Natural killer cell (primary cell): ENCODE measurements at regions of chr17 and their contacts with region 1.

Region 1: DNA sequence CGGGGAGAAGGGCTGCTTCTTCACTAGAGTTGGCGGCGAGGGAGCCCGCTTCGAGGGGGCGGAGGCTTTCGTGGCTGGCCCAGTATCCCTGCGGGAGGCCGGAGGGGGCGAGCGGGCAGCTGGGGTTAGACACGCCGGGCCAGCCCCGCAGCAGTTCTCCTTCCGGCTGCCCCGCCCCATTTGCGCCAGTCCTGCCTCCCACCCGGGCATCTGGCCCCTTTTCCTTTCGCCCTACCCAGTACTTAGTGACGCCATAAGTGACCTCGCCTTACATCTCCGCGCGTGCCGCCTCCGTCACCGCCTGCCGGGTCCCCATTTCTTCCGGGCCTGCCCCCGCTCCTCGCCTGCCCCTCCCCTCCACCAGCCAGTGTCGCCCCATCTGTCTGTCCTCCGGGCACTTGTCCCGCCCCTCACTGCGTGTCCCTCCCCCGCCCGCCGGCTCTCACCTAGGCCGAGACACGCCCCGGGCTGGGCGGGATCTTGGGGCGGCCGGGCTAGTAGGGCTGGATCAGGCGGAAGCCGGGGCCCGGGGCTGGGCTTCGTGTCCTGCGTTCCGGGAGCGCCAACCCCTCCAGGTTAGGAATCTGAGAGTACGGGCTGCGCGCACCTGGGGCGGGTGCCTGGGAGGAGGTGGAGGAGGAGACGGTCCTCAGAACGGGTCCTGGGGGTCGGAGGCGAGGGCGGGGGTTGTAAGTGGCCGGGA is 14.3 kb downstream of the SPATA32 start:
- DNase-seq: peak; percentile 89 to 96
- ATAC-seq: peak; percentile 83 to 93 (median 83)
- H3K4me3 ChIP-seq: peak overlapping the region; percentile 72
- H3K4me3 Mint-ChIP-seq: peak overlapping the region; percentile 87
- H3K27ac ChIP-seq: peak overlapping the region; percentile 81
- H3K27ac Mint-ChIP-seq: peak overlapping the region; percentile 87 to 89
- H3K4me1 ChIP-seq: peaks cover 36% of the 10 kb centered on the region
- H3K4me1 Mint-ChIP-seq: peaks cover 33 to 61% of the 10 kb centered on the region in 2 donors
- H3K27me3 ChIP-seq: no peaks in the 10 kb centered on the region
- H3K27me3 Mint-ChIP-seq: no peaks in the 10 kb centered on the region
- CTCF ChIP-seq: no peak

Region 2: DNA sequence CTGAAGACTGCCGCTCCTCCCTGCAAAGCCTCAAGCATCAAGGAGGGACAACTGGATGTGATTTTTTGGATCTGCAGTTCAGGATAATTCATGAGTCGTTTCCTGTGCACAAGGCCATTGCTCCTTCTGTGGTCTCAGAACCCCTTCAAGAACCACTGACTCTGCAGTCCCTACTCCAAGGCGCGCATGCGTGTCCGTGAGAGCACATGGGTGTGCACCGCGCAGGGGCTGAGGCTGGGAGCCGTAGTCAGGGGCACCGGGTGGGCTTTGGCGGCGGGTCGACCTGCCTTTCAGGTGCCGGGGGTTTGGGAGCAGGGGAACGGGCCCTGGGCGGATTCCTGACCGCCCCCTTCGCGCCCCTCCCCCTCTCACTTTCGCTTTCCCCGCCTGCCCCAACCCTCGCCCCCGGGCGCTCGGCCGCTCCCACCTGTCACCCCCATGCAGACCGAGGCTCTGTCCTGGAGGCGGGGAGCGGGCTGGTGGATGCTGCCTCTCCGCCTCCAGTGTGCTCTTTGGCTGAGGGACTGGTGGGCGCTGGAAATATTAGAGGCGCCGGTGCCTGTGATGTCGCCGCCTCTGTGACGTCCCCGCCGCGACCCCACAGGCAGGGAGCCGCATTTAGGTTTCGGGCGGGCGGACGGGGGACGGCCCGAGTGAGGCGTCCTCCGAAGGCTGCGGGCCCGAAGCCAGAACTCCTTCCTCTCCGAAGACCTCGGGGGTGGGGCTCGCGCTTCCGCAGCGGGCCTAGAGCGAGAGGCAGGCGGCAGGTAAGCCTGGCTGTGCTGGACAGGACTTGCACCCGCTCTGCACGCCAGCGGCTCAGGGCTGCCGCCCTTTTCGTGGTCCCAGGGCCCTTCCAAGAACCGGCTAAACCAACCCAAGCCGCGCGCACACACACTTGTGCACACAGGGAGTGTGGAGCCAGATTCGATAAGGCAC is 14.3 kb after region 1 on chr17 and contains the start of gene SPATA32:
- intact Hi-C with region 1: loop called (anchors 2 kb)
- DNase-seq: peak; percentile 42 to 81
- ATAC-seq: peak; percentile 76 to 83 (median 78)
- H3K4me3 ChIP-seq: peak within 1 kb of the TSS; percentile 62
- H3K4me3 Mint-ChIP-seq: peak within 1 kb of the TSS; percentile 84
- H3K27ac ChIP-seq: peak within 1 kb of the TSS; percentile 52
- H3K27ac Mint-ChIP-seq: peak within 1 kb of the TSS in 1 of 2 donors; percentile 81
- H3K4me1 ChIP-seq: peaks cover 20% of the 10 kb centered on the region
- H3K4me1 Mint-ChIP-seq: peaks cover 0 to 15% of the 10 kb centered on the region in 2 donors
- H3K27me3 ChIP-seq: no peaks in the 10 kb centered on the region
- H3K27me3 Mint-ChIP-seq: no peaks in the 10 kb centered on the region
- CTCF ChIP-seq: no peak
- total RNA-seq, gene SPATA32: 0.43 TPM in 1 of 3 donors, not detected in the others